K562 (cell line): ENCODE measurements at regions of chr4 and their contacts with region 1.

Region 1: GRCh38 chr4:153362184-153362583 is 17.7 kb downstream of the MND1 start:
- DNase-seq: peak; percentile 37 to 93 (median 48)
- ATAC-seq: peak; percentile 94
- H3K4me3 ChIP-seq: no peak overlapping the region
- H3K27ac ChIP-seq: peak overlapping the region; percentile 29; the same call in 2 of the 3 replicates
- H3K4me1 ChIP-seq: peaks cover 4 to 9% of the 10 kb centered on the region in 2 experiments; a peak in 3 of 5 replicates
- H3K27me3 ChIP-seq: no peaks in the 10 kb centered on the region
- CTCF ChIP-seq: no peak
- EP300 ChIP-seq: peak; percentile 55; the same call in 1 of the 2 replicates
- POLR2A ChIP-seq: no peak
- RAD21 ChIP-seq: no peak

Region 2: DNA sequence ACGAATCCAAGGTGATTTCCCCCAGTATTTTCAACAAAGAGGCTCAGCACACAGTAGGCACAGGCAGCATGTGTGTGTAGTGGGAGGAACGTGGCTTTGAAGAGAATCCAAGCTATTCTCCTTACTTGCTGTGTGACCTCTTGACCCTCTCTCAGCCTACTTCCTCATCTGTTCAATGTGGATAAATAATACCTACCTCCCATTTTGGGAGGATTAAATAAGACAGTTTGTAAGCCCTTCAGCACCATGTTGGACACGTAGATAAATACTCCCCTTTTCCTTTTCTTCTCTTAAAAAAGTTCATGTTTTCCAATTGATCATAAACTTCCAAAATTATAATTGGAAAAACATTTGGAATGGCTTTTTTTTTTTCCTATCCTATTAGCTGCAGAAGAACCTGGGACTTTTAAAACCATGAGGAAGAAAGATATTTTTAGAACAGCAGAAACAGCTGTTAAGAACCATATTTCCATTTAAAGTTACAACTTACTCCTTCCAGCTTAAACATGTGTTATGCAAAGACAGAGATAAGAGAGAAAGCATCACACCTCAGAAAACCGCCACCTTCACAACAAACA is 47.8 kb after region 1 on chr4:
- CTCF ChIA-PET with region 1: no interaction called
- POLR2A ChIA-PET with region 1: no interaction called
- in situ Hi-C with region 1: no loop called
- intact Hi-C with region 1: loop called (anchors 5 kb)
- DNase-seq: peak; percentile 60 to 92 (median 72)
- ATAC-seq: peak; percentile 93
- H3K4me3 ChIP-seq: no peak overlapping the region
- H3K27ac ChIP-seq: peak overlapping the region; percentile 92
- H3K4me1 ChIP-seq: peaks cover 0 to 17% of the 10 kb centered on the region in 2 experiments; a peak in 3 of 5 replicates
- H3K27me3 ChIP-seq: no peaks in the 10 kb centered on the region
- CTCF ChIP-seq: no peak
- EP300 ChIP-seq: peak; percentile 52; the same call in 1 of the 2 replicates
- POLR2A ChIP-seq: no peak
- RAD21 ChIP-seq: no peak